ENCODE measurements at regions of chr14 and their contacts with region 1.

Region 1: DNA sequence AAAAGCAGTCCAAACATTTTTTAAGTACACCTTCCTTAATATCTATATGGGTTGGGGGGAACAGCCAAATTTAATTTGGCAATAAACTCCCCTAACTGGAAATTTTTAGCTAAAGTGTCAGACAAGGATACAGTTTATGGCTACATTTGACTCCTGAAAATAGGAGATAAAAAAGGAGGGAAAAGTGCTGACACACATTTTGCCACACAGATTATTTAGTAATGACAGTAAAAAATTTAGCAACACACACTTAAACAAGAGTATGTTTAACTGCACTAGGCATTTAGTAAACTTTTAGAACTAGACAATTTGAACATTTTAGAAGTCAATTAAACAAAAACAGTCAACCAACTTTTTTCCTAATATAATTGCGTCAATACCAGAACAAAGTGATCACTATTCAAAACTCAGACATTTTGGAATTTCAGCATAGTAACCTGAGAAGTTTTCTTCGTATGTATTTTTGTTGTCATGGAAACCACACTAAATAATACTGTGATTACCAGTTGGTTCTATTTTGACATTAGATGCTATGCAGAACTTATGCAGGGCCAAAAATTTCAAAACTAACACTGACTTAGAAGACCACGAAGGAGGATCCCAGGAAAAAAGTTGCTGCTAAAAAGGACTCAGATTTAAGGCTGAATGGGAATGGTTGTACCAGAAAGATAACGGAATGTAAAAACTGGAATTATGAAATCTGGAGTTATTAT is 13.4 kb downstream of the GMFB start:
- DNase-seq: no peak

Region 2: DNA sequence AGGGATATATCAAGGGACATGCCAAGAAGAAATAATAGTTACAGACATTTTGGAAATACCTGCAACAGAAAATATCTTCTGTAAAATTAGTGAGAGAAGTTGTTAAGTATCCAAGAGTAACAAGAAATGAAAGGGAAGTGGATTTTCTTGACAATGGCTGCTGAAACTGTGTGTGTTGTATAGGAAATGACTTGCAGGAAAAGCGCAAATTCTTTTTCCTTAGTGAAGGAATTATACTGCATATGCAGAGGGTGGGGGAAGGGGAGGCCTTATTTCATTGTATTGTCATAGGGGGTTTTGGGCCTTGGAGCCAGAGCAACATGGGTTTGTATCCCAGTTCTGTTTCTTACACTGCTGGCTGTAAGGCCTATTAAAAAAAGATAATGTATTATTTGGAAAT is 1237.9 kb before region 1 on chr14:
- intact Hi-C with region 1: loop called in 1 of 2 experiments (anchors 5 kb)
- DNase-seq: no peak

Measured in posterior vena cava (tissue), 2 donors.